SK-N-SH (cell line): ENCODE measurements at regions of chrX and their contacts with region 1.

Region 1: DNA sequence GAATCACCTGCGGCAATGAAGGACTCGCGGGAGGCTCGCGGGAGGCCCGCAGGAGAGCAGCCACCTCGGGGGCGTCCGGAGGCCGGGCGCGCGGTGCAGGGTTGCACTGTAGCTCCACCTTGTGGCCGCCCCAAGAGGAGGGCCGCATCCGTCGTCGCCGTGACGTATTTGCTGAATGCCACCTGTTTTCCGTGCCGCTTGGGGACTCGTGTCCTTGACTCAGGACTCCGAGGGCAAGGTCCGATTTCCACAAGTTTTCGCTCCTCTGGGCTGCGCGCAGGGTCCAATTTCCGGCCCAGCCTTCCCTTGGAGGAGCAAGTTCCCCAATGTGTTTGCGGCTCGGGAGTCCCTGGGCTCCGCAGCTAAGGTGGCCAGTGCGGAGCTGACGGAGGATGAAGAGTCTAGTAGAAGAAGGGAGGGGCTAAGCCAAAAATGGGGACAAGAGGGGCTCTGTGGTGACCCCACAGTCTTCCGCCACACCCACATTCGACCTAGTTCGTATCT is 10.7 kb upstream of the DLG3 start:
- DNase-seq: peak; percentile 79
- H3K4me3 ChIP-seq: peak overlapping the region; percentile 64 to 81
- H3K27ac ChIP-seq: peak overlapping the region; percentile 70 to 84
- H3K4me1 ChIP-seq: peaks cover 0 to 8% of the 10 kb centered on the region in 2 experiments; a peak in 1 of 4 replicates
- H3K27me3 ChIP-seq: no peaks in the 10 kb centered on the region
- CTCF ChIP-seq: peak; percentile 63
- EP300 ChIP-seq: no peak
- RAD21 ChIP-seq: peak; percentile 53

Region 2: DNA sequence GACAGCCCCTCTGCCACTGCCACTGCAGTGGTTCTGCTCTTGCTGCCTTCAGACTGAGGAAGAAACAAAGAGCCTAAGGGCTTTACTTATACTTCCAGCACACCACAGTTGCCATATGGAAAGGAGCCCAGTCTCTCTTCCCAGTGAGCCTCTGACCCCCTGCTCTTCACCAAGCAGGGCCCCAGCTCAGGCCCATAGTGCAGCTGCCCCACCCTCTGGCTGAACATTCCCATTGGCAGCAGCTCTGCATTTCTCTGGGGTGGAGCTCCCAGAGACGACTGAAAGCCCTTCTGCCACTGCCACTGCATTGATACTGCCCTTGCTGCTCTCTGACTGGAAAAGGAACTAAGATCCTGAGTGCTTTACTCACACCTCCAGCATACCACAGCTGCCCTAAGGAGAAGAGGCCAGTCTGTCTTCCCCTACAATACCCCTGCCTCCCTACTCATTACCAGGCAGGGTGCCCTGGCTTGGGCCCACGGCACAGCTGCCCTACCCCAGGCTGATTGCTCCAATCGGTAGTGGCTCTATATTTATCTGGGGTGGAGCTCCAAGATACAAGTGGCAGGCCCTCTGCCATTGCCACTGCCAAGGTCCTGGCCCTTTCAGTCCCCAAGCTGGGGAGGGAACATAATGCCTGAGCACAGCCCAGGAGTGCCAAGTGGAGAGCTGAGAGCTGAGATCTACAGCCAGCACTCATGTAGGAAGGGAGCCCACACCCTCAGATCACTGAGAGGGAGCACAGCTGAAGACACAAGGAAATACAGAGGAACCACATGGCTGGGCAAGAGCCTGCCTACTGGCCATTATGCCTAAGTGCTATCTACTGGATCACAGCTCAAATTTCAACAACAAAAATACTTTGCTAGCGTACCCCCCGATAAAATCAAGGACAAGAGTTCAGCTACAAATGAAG is 420.2 kb before region 1 on chrX:
- CTCF ChIA-PET with region 1: no interaction called
- POLR2A ChIA-PET with region 1: no interaction called
- DNase-seq: no peak
- H3K4me3 ChIP-seq: no peak overlapping the region
- H3K27ac ChIP-seq: no peak overlapping the region
- H3K4me1 ChIP-seq: no peaks in the 10 kb centered on the region
- H3K27me3 ChIP-seq: peaks cover 14% of the 10 kb centered on the region; the same call in 1 of the 2 replicates
- CTCF ChIP-seq: no peak
- EP300 ChIP-seq: no peak
- RAD21 ChIP-seq: no peak

Region 3: GRCh38 chrX:70301716-70302115 is 132.2 kb before region 1 on chrX:
- CTCF ChIA-PET with region 1: no interaction called
- POLR2A ChIA-PET with region 1: no interaction called
- DNase-seq: no peak
- H3K4me3 ChIP-seq: no peak overlapping the region
- H3K27ac ChIP-seq: peak overlapping the region; percentile 22 to 76; a peak in 3 of 4 replicates
- H3K4me1 ChIP-seq: no peaks in the 10 kb centered on the region; a peak in 1 of 4 replicates
- H3K27me3 ChIP-seq: no peaks in the 10 kb centered on the region
- CTCF ChIP-seq: no peak
- EP300 ChIP-seq: no peak
- RAD21 ChIP-seq: no peak

Region 4: GRCh38 chrX:70444326-70444945 is 10.5 kb after region 1 on chrX and contains the start of gene DLG3:
- CTCF ChIA-PET with region 1: interaction called, 23 read pairs
- POLR2A ChIA-PET with region 1: interaction called, 4 read pairs
- DNase-seq: peak; percentile 84
- H3K4me3 ChIP-seq: peak within 1 kb of the TSS; percentile 46 to 59
- H3K27ac ChIP-seq: no peak within 1 kb of the TSS
- H3K4me1 ChIP-seq: no peaks in the 10 kb centered on the region; a peak in 1 of 4 replicates
- H3K27me3 ChIP-seq: peaks cover 16% of the 10 kb centered on the region
- CTCF ChIP-seq: 0 out of 2 replicates have a peak, but pooled peaks have one; percentile 8
- EP300 ChIP-seq: no peak
- RAD21 ChIP-seq: no peak
- polyA plus RNA-seq, gene DLG3: 11.7 TPM in 2 replicates

Region 5: GRCh38 chrX:70454441-70455365 is 20.8 kb after region 1 on chrX:
- CTCF ChIA-PET with region 1: interaction called, 11 read pairs
- POLR2A ChIA-PET with region 1: no interaction called
- DNase-seq: peak; percentile 88
- H3K4me3 ChIP-seq: peak overlapping the region; percentile 62 to 64
- H3K27ac ChIP-seq: peak overlapping the region in 1 of 2 experiments; percentile 54; a peak in 1 of 4 replicates
- H3K4me1 ChIP-seq: peaks cover 0 to 4% of the 10 kb centered on the region in 2 experiments; a peak in 1 of 4 replicates
- H3K27me3 ChIP-seq: no peaks in the 10 kb centered on the region
- CTCF ChIP-seq: peak; percentile 96
- EP300 ChIP-seq: no peak
- RAD21 ChIP-seq: peak; percentile 79